ENCODE measurements at regions of chr6 and their contacts with region 1.

Region 1: GRCh38 chr6:154928325-154928922 is 66.7 kb upstream of the TIAM2 start:
- DNase-seq: peak; percentile 43
- ATAC-seq: peak; percentile 84
- H3K4me3 ChIP-seq: no peak overlapping the region
- H3K27ac ChIP-seq: no peak overlapping the region
- H3K4me1 ChIP-seq: peaks cover 13% of the 10 kb centered on the region; the same call in 1 of the 2 replicates
- H3K27me3 ChIP-seq: no peaks in the 10 kb centered on the region
- CTCF ChIP-seq: peak; percentile 86

Region 2: DNA sequence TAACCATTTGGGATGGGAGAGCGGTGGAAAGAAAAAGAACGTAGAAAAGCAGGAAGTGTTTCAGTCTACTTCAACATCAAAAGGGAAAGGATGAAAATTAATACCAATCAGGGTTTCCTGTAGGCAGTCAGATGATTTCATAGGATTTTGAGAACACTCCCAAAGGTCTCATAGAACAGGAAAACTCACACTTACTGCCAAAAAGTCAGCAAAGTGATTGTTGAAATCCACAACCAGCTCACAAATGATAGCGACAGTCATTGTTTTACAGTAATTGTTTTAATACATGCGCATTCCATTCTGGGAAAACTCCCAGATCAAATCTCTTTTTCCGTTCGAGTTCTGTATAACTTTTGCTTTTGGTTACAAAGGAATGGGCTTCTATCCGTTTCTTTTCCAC is 412.6 kb before region 1 on chr6:
- CTCF ChIA-PET with region 1: no interaction called
- POLR2A ChIA-PET with region 1: no interaction called
- in situ Hi-C with region 1: no loop called
- intact Hi-C with region 1: no loop called
- DNase-seq: no peak
- ATAC-seq: no peak
- H3K4me3 ChIP-seq: no peak overlapping the region
- H3K27ac ChIP-seq: no peak overlapping the region; the same call in 1 of the 2 replicates
- H3K4me1 ChIP-seq: peaks cover 10% of the 10 kb centered on the region
- H3K27me3 ChIP-seq: no peaks in the 10 kb centered on the region
- CTCF ChIP-seq: no peak

Region 3: GRCh38 chr6:154951345-154952200 is 23.1 kb after region 1 on chr6:
- CTCF ChIA-PET with region 1: no interaction called
- POLR2A ChIA-PET with region 1: interaction called, 13 read pairs
- in situ Hi-C with region 1: no loop called
- intact Hi-C with region 1: no loop called
- DNase-seq: no peak
- ATAC-seq: no peak
- H3K4me3 ChIP-seq: no peak overlapping the region
- H3K27ac ChIP-seq: no peak overlapping the region
- H3K4me1 ChIP-seq: no peaks in the 10 kb centered on the region
- H3K27me3 ChIP-seq: no peaks in the 10 kb centered on the region
- CTCF ChIP-seq: no peak

Region 4: GRCh38 chr6:155248008-155249001 is 319.9 kb after region 1 on chr6:
- CTCF ChIA-PET with region 1: interaction called, 5 read pairs
- POLR2A ChIA-PET with region 1: no interaction called
- in situ Hi-C with region 1: no loop called
- intact Hi-C with region 1: loop called (anchors 5 kb)
- DNase-seq: peak; percentile 27
- ATAC-seq: peak; percentile 76
- H3K4me3 ChIP-seq: no peak overlapping the region
- H3K27ac ChIP-seq: peak overlapping the region; percentile 80
- H3K4me1 ChIP-seq: peaks cover 3% of the 10 kb centered on the region; the same call in 1 of the 2 replicates
- H3K27me3 ChIP-seq: no peaks in the 10 kb centered on the region
- CTCF ChIP-seq: peak; percentile 85

Region 5: GRCh38 chr6:156080371-156080770 is 1151.9 kb after region 1 on chr6:
- CTCF ChIA-PET with region 1: no interaction called
- POLR2A ChIA-PET with region 1: no interaction called
- in situ Hi-C with region 1: no loop called
- intact Hi-C with region 1: no loop called
- DNase-seq: no peak
- ATAC-seq: no peak
- H3K4me3 ChIP-seq: no peak overlapping the region
- H3K27ac ChIP-seq: no peak overlapping the region
- H3K4me1 ChIP-seq: no peaks in the 10 kb centered on the region
- H3K27me3 ChIP-seq: no peaks in the 10 kb centered on the region
- CTCF ChIP-seq: no peak